Vagina (tissue), 2 donors: ENCODE measurements at regions of chr16 and their contacts with region 1.

Region 1: DNA sequence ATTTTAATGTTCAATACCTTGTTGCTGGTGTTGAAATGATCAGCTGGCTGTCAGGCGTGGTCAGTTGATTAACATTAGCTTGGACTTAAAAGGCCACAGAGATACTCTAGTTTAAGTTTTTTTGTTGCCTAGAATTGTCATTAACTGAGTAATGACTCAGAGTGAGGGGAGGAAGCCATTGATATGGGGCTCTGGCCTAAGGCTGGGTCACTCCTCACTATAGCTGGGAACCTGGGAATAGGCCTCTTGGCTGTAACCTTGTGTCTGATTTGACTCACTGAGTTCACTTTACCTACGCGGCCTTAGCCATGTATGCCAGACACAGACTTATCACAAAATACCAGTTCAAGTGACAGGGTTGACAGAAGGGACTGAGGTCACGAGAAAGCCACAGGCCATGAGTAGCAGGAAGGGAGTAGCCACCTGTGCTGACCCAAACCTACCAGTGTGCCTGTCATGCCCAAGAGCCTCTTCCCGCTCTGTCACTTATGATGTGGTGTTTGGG is 37.9 kb upstream of the ADCY7 start:
- DNase-seq: no peak
- H3K4me3 ChIP-seq: no peak overlapping the region
- H3K27ac ChIP-seq: no peak overlapping the region
- H3K4me1 ChIP-seq: no peaks in the 10 kb centered on the region
- H3K27me3 ChIP-seq: no peaks in the 10 kb centered on the region
- CTCF ChIP-seq: no peak
- POLR2A ChIP-seq: no peak

Region 2: DNA sequence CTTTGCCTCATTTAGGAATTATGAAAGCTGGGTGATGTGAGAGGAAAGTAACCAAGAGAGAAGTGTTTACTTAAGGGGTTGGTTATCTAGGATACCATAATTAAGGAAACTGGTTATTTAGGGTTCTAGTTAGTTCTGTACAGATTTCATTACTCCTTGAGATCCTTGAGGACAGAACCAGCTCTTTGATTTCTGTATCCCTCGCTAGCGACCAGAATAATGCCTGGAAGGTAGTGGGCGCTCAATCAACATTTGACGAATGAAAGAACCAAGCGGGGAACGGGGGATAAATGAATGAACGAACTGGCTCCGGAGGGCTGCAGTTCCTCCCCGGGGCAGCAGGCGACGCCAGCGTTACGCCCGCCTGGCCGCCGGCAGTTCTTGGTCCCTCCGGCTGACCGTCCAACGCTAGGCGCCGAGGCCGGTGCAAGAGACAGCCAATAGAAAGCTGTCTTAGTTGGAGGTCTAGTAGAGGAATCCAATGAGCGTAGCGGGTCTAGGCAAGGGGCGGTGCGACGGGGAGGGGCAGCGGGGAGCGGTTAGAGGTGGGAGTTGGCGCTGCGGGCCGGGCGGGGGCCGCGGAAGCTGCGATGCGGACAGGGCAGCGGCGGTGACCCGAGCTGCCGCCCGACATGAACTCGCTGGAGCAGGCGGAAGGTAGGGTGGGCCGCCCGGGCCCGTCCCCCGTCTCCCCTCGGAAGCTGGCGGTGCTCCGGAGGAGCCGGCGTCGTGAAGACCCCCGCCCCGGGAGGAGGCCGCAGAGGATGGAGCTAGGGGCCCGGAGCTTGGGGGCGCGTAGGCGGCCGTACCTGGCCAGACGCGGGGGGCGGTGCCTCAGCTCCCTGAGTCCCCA is 203.5 kb before region 1 on chr16 and contains the start of gene CNEP1R1:
- intact Hi-C with region 1: loop called (anchors 10 kb)
- DNase-seq: peak in 1 of 2 donors; percentile 98
- H3K4me3 ChIP-seq: peak within 1 kb of the TSS; percentile 99 to 100
- H3K27ac ChIP-seq: peak within 1 kb of the TSS; percentile 81
- H3K4me1 ChIP-seq: peaks cover 29% of the 10 kb centered on the region
- H3K27me3 ChIP-seq: no peaks in the 10 kb centered on the region
- CTCF ChIP-seq: peak; percentile 98 to 100 (median 99)
- POLR2A ChIP-seq: peak in 1 of 2 donors; percentile 30
- total RNA-seq, gene CNEP1R1: 20.4 TPM